Activated naive CD4-positive, alpha-beta T cell treated with anti-CD3 and anti-CD28 coated beads for 36 hours (primary cell): ENCODE measurements at regions of chr9 and their contacts with region 1.

Region 1: GRCh38 chr9:32571969-32572899 is 725 bp downstream of the NDUFB6 start:
- DNase-seq: peak; percentile 88
- H3K4me3 Mint-ChIP-seq: peak overlapping the region; percentile 88
- H3K27ac Mint-ChIP-seq: peak overlapping the region; percentile 92
- H3K4me1 Mint-ChIP-seq: peaks cover 16% of the 10 kb centered on the region
- H3K27me3 Mint-ChIP-seq: no peaks in the 10 kb centered on the region

Region 2: DNA sequence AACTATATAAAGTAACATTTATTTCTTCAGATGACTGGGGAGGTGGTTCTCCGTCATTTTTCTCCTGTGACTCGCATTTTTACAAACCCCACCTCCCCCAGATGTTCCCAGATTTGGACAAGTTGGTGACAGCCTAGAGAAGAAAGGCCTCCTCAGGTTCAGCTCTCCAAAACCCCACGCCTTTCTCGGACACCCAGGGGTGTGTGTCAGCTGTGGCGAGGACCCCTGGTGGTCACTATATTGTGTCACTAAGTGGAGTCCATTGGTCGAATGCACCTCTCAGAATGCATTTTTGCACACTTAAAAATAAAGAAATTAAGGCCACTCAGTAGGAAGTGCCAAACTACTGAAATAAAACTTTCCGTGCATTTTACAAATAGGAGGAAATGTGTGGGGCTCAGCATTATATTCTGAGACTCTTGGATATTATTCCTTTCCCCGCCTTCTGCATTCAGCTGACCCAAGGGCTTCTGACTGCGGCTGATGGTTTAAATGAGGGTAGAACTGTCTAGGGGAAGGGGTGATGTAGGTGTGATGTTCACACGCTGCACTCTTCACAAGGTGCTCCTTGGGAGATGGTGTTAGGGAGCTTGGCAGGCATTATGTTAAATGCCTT is 140.2 kb before region 1 on chr9:
- CTCF ChIA-PET with region 1: no interaction called
- intact Hi-C with region 1: loop called (anchors 2 kb)
- DNase-seq: peak; percentile 38
- H3K4me3 Mint-ChIP-seq: no peak overlapping the region
- H3K27ac Mint-ChIP-seq: no peak overlapping the region
- H3K4me1 Mint-ChIP-seq: peaks cover 3% of the 10 kb centered on the region
- H3K27me3 Mint-ChIP-seq: no peaks in the 10 kb centered on the region

Region 3: GRCh38 chr9:32526041-32526706 is 46.1 kb before region 1 on chr9 and contains the start of gene RIGI:
- CTCF ChIA-PET with region 1: interaction called, 15 read pairs
- intact Hi-C with region 1: loop called (anchors 1 kb)
- DNase-seq: peak; percentile 90
- H3K4me3 Mint-ChIP-seq: peak within 1 kb of the TSS; percentile 77
- H3K27ac Mint-ChIP-seq: peak within 1 kb of the TSS; percentile 84
- H3K4me1 Mint-ChIP-seq: peaks cover 32% of the 10 kb centered on the region
- H3K27me3 Mint-ChIP-seq: no peaks in the 10 kb centered on the region
- total RNA-seq, gene RIGI: 7.5 to 8.4 TPM

Region 4: DNA sequence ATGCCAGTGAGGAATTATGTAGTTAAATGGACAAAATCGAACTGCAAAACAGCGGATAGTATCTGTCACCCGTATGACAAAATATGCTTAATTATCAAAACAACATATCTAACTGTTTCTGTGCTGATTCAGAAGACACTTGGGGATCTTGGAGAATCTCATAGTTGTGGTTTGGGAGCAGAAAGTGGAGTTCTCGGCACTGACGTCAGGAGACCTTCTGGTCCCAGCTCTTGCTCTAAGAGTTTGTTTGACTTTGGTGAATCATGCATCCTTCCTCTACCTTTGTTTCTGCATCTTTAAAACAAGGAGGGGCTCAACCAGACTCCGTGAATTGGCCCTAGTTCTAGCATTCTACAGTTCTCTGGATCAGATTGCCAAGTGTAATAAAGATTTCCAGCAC is 100.2 kb after region 1 on chr9:
- CTCF ChIA-PET with region 1: no interaction called
- intact Hi-C with region 1: no loop called
- DNase-seq: no peak
- H3K4me3 Mint-ChIP-seq: no peak overlapping the region
- H3K27ac Mint-ChIP-seq: no peak overlapping the region
- H3K4me1 Mint-ChIP-seq: no peaks in the 10 kb centered on the region
- H3K27me3 Mint-ChIP-seq: no peaks in the 10 kb centered on the region